ENCODE measurements at regions of chr19 and their contacts with region 1.

Region 1: GRCh38 chr19:45994989-45995714 is at the start of gene CCDC61:
- DNase-seq: peak; percentile 96
- H3K4me3 Mint-ChIP-seq: no peak within 1 kb of the TSS
- H3K27ac Mint-ChIP-seq: no peak within 1 kb of the TSS
- H3K4me1 Mint-ChIP-seq: peaks cover 17% of the 10 kb centered on the region
- H3K27me3 Mint-ChIP-seq: peaks cover 4% of the 10 kb centered on the region
- total RNA-seq, gene CCDC61: 24.0 and 24.1 TPM in 2 replicates

Region 2: GRCh38 chr19:45423589-45424190 is 571.5 kb before region 1 on chr19 and contains the start of gene ERCC1:
- intact Hi-C with region 1: no loop called
- DNase-seq: peak; percentile 82
- H3K4me3 Mint-ChIP-seq: peak within 1 kb of the TSS; percentile 97
- H3K27ac Mint-ChIP-seq: peak within 1 kb of the TSS; percentile 95
- H3K4me1 Mint-ChIP-seq: peaks cover 50% of the 10 kb centered on the region
- H3K27me3 Mint-ChIP-seq: peaks cover 9% of the 10 kb centered on the region
- total RNA-seq, gene ERCC1: 143 and 152 TPM in 2 replicates

Region 3: GRCh38 chr19:45779231-45780145 is 215.7 kb before region 1 on chr19:
- intact Hi-C with region 1: loop called (anchors 1 kb)
- DNase-seq: peak; percentile 83
- H3K4me3 Mint-ChIP-seq: peak overlapping the region; percentile 71
- H3K27ac Mint-ChIP-seq: peak overlapping the region; percentile 24
- H3K4me1 Mint-ChIP-seq: peaks cover 16% of the 10 kb centered on the region
- H3K27me3 Mint-ChIP-seq: peaks cover 20% of the 10 kb centered on the region

Region 4: GRCh38 chr19:45902651-45903625 is 92.2 kb before region 1 on chr19:
- intact Hi-C with region 1: loop called (anchors 1 kb)
- DNase-seq: peak; percentile 100
- H3K4me3 Mint-ChIP-seq: peak overlapping the region; percentile 88
- H3K27ac Mint-ChIP-seq: peak overlapping the region; percentile 80
- H3K4me1 Mint-ChIP-seq: peaks cover 16% of the 10 kb centered on the region
- H3K27me3 Mint-ChIP-seq: peaks cover 1% of the 10 kb centered on the region

Region 5: DNA sequence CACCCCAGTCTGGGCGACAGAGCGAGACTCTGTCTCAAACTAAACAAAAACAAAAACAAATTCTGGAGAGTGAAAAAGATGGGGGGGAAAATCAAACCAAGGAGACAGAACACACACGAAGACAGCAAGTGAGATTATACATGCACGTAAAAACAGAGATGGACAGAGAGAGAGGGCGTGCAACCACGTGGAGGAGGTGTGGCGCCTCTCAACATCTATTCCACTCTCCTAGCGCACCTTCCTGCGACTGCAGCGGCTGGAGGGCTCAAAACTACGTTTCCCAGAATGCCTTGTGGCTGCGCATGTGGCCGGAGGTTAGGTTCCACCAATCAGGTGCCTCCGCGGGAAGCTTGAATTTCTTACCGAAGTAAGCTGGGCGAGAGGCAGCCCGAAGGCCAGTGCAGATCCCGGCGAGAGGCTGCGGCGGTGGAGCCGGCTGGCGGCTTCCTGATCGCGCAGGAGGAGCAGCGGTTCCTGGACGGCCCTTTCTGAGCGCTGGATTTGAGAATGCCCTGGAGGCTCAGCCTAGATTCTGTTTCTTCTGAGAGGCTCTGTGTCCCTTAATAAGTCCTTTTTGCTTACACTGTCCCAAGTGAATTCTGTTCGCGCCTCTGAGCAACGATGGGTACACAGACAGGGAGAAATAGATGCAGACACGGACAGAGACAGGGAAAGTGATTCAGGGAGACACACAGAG is 67.4 kb before region 1 on chr19:
- intact Hi-C with region 1: loop called (anchors 1 kb)
- DNase-seq: peak; percentile 86
- H3K4me3 Mint-ChIP-seq: peak overlapping the region; percentile 78
- H3K27ac Mint-ChIP-seq: no peak overlapping the region
- H3K4me1 Mint-ChIP-seq: peaks cover 19% of the 10 kb centered on the region
- H3K27me3 Mint-ChIP-seq: peaks cover 15% of the 10 kb centered on the region

Region 6: DNA sequence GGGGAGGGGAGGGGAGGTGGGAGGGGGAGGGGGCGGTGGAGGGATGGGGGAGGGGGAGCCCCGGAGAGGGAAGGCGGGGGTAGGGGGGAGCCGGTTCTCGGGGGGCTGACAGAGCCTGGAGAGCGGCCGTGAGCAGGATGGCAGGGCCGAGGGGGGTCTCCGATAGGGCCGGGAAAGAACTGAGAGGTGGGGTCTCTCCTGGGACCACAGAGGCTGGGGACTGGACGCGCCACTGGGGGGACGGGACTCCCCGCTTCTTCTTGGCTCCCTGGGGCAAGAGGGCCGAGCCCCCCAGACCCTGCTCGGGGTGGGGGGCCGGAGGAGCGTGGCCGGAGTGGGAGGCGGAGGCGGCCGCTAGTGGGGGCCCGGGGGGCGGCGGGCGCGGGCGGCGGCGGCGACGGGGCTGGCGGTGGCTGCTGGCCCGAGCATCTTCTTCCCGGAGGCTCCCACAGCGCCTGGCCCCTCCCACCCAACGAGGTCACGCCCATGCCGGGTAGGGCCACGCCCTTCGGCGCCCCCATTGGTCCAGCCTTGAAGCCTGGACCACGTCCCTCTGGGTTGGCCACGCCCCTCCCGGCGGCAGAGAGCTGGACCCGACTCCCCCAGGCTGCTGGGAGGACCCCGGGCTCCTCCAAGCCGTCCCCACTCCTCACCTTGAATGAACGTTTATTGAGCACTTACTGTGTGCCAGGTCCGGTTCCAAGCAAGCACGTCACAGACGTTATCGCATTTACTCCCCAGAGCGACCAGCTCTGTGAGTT is 21.4 kb before region 1 on chr19 and contains the start of gene NOVA2:
- intact Hi-C with region 1: loop called (anchors 1 kb)
- DNase-seq: peak; percentile 46
- H3K4me3 Mint-ChIP-seq: no peak within 1 kb of the TSS
- H3K27ac Mint-ChIP-seq: no peak within 1 kb of the TSS
- H3K4me1 Mint-ChIP-seq: peaks cover 16% of the 10 kb centered on the region
- H3K27me3 Mint-ChIP-seq: peaks cover 60% of the 10 kb centered on the region
- total RNA-seq, gene NOVA2: not detected in 2 replicates

Region 7: DNA sequence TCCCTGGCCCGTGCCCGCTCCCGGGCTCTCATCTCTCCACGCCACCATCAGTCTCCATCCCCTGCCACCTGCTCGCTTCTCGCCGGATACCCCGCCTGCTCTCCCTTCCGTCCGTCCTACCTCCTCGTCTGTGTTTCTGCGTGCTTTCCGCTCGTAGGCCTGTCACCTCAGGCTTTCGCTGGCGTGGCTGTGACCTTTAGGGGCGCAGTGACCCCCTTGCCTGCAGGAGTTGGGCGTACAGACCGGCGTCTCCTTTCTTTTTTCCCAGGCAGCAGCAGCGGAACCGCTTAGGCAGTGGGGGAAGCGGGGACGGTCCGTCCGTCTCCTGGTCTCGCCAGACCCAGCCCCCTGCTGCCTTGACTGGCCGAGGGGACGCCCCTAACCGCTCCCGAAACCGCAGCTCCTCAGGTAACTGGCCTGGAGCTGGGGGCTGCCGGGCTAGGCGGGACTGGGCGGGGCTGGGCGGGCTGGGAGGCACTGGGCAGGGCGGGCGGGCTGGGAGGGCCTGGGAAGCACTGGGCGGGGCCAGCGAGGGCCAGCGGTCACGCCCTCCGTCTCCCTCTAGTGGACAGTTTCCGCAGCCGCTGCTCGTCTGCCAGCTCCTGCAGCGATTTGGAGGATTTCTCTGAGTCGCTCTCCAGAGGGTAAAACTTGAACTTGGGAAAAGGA is 21.4 kb after region 1 on chr19:
- intact Hi-C with region 1: loop called (anchors 1 kb)
- DNase-seq: peak; percentile 74
- H3K4me3 Mint-ChIP-seq: peak overlapping the region; percentile 89
- H3K27ac Mint-ChIP-seq: peak overlapping the region; percentile 78
- H3K4me1 Mint-ChIP-seq: peaks cover 15% of the 10 kb centered on the region
- H3K27me3 Mint-ChIP-seq: peaks cover 12% of the 10 kb centered on the region

Region 8: GRCh38 chr19:46124638-46125115 is 129.5 kb after region 1 on chr19 and contains the start of gene IGFL3:
- intact Hi-C with region 1: no loop called
- DNase-seq: no peak
- H3K4me3 Mint-ChIP-seq: no peak within 1 kb of the TSS
- H3K27ac Mint-ChIP-seq: no peak within 1 kb of the TSS
- H3K4me1 Mint-ChIP-seq: no peaks in the 10 kb centered on the region
- H3K27me3 Mint-ChIP-seq: peaks cover 20% of the 10 kb centered on the region
- total RNA-seq, gene IGFL3: not detected in 2 replicates

Region 9: GRCh38 chr19:46346821-46347571 is 351.8 kb after region 1 on chr19 and contains the start of gene PPP5C:
- intact Hi-C with region 1: loop called (anchors 1 kb)
- DNase-seq: peak; percentile 86
- H3K4me3 Mint-ChIP-seq: peak within 1 kb of the TSS; percentile 94
- H3K27ac Mint-ChIP-seq: peak within 1 kb of the TSS; percentile 93
- H3K4me1 Mint-ChIP-seq: peaks cover 48% of the 10 kb centered on the region
- H3K27me3 Mint-ChIP-seq: peaks cover 17% of the 10 kb centered on the region
- total RNA-seq, gene PPP5C: 160 and 173 TPM in 2 replicates